ENCODE measurements at regions of chr5 and their contacts with region 1.

Region 1: DNA sequence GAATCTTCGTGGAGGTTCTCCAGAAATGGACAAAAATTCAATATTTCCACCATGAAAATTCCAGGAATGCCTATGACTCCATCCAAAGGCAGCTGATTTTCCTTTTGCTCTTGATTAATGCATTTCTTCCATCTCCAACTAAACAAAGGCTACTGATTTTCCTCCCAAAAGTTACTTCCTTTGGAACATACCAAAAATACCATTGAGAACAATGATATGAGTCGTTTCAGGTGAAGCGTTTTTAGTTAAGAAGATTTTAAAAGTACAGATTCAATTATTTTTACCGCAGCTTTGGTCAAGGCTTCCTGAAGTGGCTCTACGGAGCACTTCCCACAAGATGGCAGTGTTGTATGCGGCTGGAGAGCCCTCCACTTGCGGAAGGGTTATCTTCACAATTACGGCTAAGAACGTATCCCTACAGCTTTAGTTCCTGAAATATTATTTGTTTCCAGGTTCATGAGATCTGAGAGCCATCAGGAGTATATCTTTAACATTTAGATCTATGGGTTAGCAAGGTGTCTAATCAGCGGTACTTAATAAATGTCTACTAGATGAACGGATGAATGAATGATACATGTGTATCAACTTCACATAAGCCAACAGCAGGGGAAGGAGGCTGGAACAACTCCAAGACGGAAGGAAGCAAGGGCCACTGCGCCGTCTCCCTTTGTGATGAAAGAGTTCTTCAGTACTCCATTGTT is 35.9 kb upstream of the ARSB start:
- DNase-seq: no peak
- ATAC-seq: peak; percentile 89
- H3K4me3 ChIP-seq: no peak overlapping the region
- H3K27ac ChIP-seq: no peak overlapping the region
- H3K4me1 ChIP-seq: no peaks in the 10 kb centered on the region
- H3K27me3 ChIP-seq: no peaks in the 10 kb centered on the region; a peak in 1 of 4 replicates
- CTCF ChIP-seq: peak; percentile 68 to 83 (median 78)
- EP300 ChIP-seq: no peak
- POLR2A ChIP-seq: no peak
- RAD21 ChIP-seq: peak; percentile 67

Region 2: DNA sequence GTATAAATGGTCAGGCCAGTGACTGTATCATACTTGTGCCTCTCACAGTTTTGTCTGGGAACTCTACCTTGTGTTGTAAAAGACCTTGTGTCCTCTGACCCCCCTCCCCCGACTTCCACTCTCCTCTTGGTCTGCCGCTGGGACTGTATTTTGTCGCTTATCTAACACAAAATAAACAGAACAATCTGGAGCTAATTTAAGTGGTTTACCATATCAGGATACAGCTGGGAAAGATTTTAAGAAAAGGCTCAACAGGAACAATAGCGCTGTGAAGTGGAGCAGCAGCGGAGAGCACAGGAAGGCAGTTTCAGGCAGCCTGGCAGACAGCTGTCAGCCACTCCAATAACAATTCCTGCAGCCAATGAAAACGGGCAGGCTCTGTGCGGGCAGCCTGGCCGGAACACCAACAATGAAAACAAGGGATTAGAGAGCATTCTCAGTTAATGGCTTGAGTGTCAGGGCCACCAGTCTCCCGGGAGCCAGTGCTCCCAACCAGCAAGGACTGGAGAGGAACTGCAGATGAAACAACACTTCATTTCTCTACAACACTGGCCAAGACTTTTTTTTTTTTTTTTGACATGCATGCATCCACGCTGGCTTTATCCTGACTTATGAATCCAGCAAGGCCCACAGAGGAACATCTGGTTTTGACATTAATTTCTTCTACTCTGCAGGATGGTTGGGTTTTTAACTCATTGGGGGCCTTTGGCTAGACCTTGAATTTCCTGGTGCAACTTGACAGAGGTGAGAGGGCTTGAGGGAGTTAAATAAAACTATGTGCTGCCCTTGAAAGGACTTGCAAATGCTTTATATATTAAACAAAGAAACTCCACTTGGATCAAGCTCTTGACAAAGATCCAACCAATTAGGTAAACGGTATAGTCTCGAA is 112.6 kb before region 1 on chr5:
- CTCF ChIA-PET with region 1: interaction called, 123 read pairs
- POLR2A ChIA-PET with region 1: no interaction called
- RAD21 ChIA-PET with region 1: interaction called, 4 read pairs
- SMC1A ChIA-PET with region 1: interaction called, 98 read pairs
- in situ Hi-C with region 1: no loop called
- intact Hi-C with region 1: no loop called
- DNase-seq: no peak
- ATAC-seq: no peak
- H3K4me3 ChIP-seq: no peak overlapping the region
- H3K27ac ChIP-seq: peak overlapping the region; percentile 47
- H3K4me1 ChIP-seq: peaks cover 43% of the 10 kb centered on the region
- H3K27me3 ChIP-seq: no peaks in the 10 kb centered on the region
- CTCF ChIP-seq: no peak
- EP300 ChIP-seq: no peak
- POLR2A ChIP-seq: no peak
- RAD21 ChIP-seq: no peak

Region 3: GRCh38 chr5:78993165-78993564 is 27.8 kb before region 1 on chr5:
- CTCF ChIA-PET with region 1: interaction called, 8 read pairs
- POLR2A ChIA-PET with region 1: no interaction called
- RAD21 ChIA-PET with region 1: interaction called, 9 read pairs
- SMC1A ChIA-PET with region 1: interaction called, 19 read pairs
- in situ Hi-C with region 1: no loop called
- intact Hi-C with region 1: no loop called
- DNase-seq: no peak
- ATAC-seq: peak; percentile 86
- H3K4me3 ChIP-seq: no peak overlapping the region
- H3K27ac ChIP-seq: no peak overlapping the region
- H3K4me1 ChIP-seq: peaks cover 4% of the 10 kb centered on the region; the same call in 1 of the 2 replicates
- H3K27me3 ChIP-seq: no peaks in the 10 kb centered on the region
- CTCF ChIP-seq: no peak
- EP300 ChIP-seq: no peak
- POLR2A ChIP-seq: no peak
- RAD21 ChIP-seq: no peak

Region 4: GRCh38 chr5:79055017-79055416 is 34.0 kb after region 1 on chr5:
- CTCF ChIA-PET with region 1: interaction called, 10 read pairs
- POLR2A ChIA-PET with region 1: no interaction called
- RAD21 ChIA-PET with region 1: no interaction called
- SMC1A ChIA-PET with region 1: no interaction called
- in situ Hi-C with region 1: no loop called
- intact Hi-C with region 1: no loop called
- DNase-seq: no peak
- ATAC-seq: no peak
- H3K4me3 ChIP-seq: no peak overlapping the region
- H3K27ac ChIP-seq: no peak overlapping the region
- H3K4me1 ChIP-seq: no peaks in the 10 kb centered on the region
- H3K27me3 ChIP-seq: peaks cover 0 to 2% of the 10 kb centered on the region in 2 experiments; a peak in 1 of 4 replicates
- CTCF ChIP-seq: no peak
- EP300 ChIP-seq: no peak
- POLR2A ChIP-seq: no peak
- RAD21 ChIP-seq: no peak

Region 5: GRCh38 chr5:79109527-79110492 is 88.8 kb after region 1 on chr5:
- CTCF ChIA-PET with region 1: interaction called, 84 read pairs
- POLR2A ChIA-PET with region 1: no interaction called
- RAD21 ChIA-PET with region 1: interaction called, 11 read pairs
- SMC1A ChIA-PET with region 1: interaction called, 30 read pairs
- in situ Hi-C with region 1: no loop called
- intact Hi-C with region 1: loop called (anchors 1 kb)
- DNase-seq: no peak
- ATAC-seq: peak; percentile 75
- H3K4me3 ChIP-seq: no peak overlapping the region
- H3K27ac ChIP-seq: no peak overlapping the region
- H3K4me1 ChIP-seq: no peaks in the 10 kb centered on the region
- H3K27me3 ChIP-seq: peaks cover 4 to 8% of the 10 kb centered on the region in 2 experiments
- CTCF ChIP-seq: peak; percentile 55 to 68 (median 68)
- EP300 ChIP-seq: no peak
- POLR2A ChIP-seq: no peak
- RAD21 ChIP-seq: peak; percentile 41

Region 6: GRCh38 chr5:79464695-79465332 is 443.8 kb after region 1 on chr5:
- CTCF ChIA-PET with region 1: interaction called, 105 read pairs
- POLR2A ChIA-PET with region 1: no interaction called
- RAD21 ChIA-PET with region 1: interaction called, 19 read pairs
- SMC1A ChIA-PET with region 1: interaction called, 116 read pairs
- in situ Hi-C with region 1: loop called (anchors 5 kb)
- intact Hi-C with region 1: loop called (anchors 2 kb)
- DNase-seq: no peak
- ATAC-seq: peak; percentile 75
- H3K4me3 ChIP-seq: no peak overlapping the region
- H3K27ac ChIP-seq: no peak overlapping the region
- H3K4me1 ChIP-seq: no peaks in the 10 kb centered on the region
- H3K27me3 ChIP-seq: no peaks in the 10 kb centered on the region
- CTCF ChIP-seq: peak; percentile 52 to 72 (median 62); a peak in 5 of 6 replicates
- EP300 ChIP-seq: no peak
- POLR2A ChIP-seq: no peak
- RAD21 ChIP-seq: peak; percentile 87

Region 7: GRCh38 chr5:79974891-79975290 is 953.9 kb after region 1 on chr5:
- CTCF ChIA-PET with region 1: no interaction called
- POLR2A ChIA-PET with region 1: no interaction called
- RAD21 ChIA-PET with region 1: no interaction called
- SMC1A ChIA-PET with region 1: no interaction called
- in situ Hi-C with region 1: no loop called
- intact Hi-C with region 1: no loop called
- DNase-seq: no peak
- ATAC-seq: no peak
- H3K4me3 ChIP-seq: no peak overlapping the region
- H3K27ac ChIP-seq: no peak overlapping the region
- H3K4me1 ChIP-seq: no peaks in the 10 kb centered on the region
- H3K27me3 ChIP-seq: no peaks in the 10 kb centered on the region
- CTCF ChIP-seq: no peak
- EP300 ChIP-seq: no peak
- POLR2A ChIP-seq: no peak
- RAD21 ChIP-seq: no peak